Pancreas (tissue), 10 donors: ENCODE measurements at regions of chr7 and their contacts with region 1.

Region 1: DNA sequence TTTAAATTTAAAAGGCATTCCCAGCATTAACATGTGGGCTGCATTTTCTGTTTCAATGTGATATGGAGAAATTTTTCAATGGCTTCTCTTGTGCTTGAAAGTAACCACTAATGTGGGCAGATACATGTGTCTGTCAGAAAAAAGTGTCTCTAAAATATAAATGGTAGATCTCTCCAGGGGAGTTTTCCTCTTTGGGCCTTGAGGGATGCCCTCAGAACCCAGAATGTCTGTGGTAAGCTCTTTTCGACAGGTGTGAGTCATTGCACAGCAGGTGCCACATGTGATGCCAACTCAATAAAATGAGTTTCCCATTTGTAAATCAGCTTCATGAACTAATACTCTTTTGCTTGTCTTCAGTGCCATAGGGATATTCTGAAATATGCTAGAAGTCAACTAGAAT is 221.0 kb downstream of the SEMA3E start:
- DNase-seq: no peak
- ATAC-seq: no peak
- H3K4me3 ChIP-seq: no peak overlapping the region
- H3K27ac ChIP-seq: no peak overlapping the region
- H3K4me1 ChIP-seq: no peaks in the 10 kb centered on the region
- H3K27me3 ChIP-seq: no peaks in the 10 kb centered on the region
- CTCF ChIP-seq: no peak

Region 2: DNA sequence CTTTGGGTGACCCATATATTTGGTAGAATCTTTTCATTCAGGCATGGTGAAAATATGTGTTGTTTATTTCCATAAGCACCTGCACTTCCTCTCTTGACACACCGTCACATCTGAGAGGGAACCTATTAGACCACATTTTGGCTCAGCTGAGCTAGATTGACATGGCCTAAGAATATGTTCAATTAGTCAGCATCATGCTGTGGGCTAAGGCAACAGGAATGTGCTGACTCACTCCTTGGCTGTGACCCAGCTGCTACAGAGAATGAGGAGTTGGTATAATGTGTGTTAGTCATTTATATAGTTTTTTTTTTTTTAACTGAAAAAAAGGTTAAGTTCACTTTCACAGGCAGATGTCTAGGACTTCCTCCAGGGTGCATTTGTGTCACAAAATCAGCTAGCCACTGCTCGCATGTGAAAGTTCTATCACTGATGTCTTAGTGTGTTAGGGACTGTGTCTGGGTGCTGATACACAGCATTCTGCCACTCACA is 40.4 kb after region 1 on chr7:
- intact Hi-C with region 1: no loop called
- DNase-seq: peak in 5 of 6 donors; percentile 62 to 90 (median 71)
- ATAC-seq: peak; percentile 87 to 97 (median 92)
- H3K4me3 ChIP-seq: no peak overlapping the region
- H3K27ac ChIP-seq: no peak overlapping the region
- H3K4me1 ChIP-seq: no peaks in the 10 kb centered on the region
- H3K27me3 ChIP-seq: no peaks in the 10 kb centered on the region
- CTCF ChIP-seq: no peak

Region 3: DNA sequence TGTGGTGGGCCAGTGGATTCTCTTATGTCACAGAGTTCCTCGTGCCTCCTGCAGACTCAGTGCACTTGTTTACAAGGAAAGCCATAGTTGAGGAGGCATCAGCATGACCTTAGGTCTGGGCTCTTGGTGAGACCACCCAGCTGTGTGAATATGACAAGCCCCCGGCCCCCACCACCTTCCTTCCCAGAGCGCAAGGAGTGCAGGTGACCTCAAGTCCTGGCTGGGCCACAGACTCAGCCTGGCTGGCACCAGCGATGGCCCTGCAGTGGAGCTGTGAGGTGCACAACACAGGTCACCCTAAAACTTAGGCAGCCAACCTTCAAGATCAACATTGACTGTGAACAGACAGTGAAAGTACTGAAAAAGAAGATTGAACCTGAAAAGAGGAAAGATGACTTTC is 235.2 kb after region 1 on chr7:
- intact Hi-C with region 1: loop called in 1 of 3 experiments (anchors 10 kb)
- DNase-seq: no peak
- ATAC-seq: no peak
- H3K4me3 ChIP-seq: no peak overlapping the region
- H3K27ac ChIP-seq: no peak overlapping the region
- H3K4me1 ChIP-seq: no peaks in the 10 kb centered on the region
- H3K27me3 ChIP-seq: no peaks in the 10 kb centered on the region
- CTCF ChIP-seq: no peak